ENCODE measurements at regions of chr9 and their contacts with region 1.

Region 1: GRCh38 chr9:385818-386398 is 171.2 kb downstream of the DOCK8 start:
- DNase-seq: no peak
- ATAC-seq: no peak
- H3K4me3 Mint-ChIP-seq: no peak overlapping the region
- H3K27ac Mint-ChIP-seq: no peak overlapping the region
- H3K4me1 Mint-ChIP-seq: no peaks in the 10 kb centered on the region
- H3K27me3 Mint-ChIP-seq: no peaks in the 10 kb centered on the region
- CTCF ChIP-seq: no peak

Region 2: DNA sequence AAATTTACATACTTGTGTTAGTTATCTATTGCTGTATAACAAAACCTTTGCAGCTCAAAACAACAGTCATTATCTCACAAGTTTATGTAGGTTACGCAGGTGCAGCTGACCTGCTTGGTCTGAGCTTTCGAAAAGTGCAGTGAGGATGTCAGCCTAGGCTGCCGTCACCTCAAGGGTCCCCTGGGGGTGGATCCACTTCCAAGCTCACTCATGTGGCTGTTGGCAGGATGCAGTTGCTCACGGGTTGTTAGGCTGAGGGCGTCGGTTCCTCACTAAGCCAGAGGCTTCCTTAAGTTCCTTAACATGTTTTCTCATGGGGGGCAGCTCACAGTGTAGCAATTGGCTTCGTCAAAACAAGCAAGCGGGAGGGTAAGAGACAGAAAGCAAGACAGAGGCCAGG is 31.5 kb before region 1 on chr9:
- CTCF ChIA-PET with region 1: no interaction called
- POLR2A ChIA-PET with region 1: no interaction called
- intact Hi-C with region 1: no loop called
- DNase-seq: no peak
- ATAC-seq: no peak
- H3K4me3 Mint-ChIP-seq: no peak overlapping the region
- H3K27ac Mint-ChIP-seq: no peak overlapping the region
- H3K4me1 Mint-ChIP-seq: peaks cover 9% of the 10 kb centered on the region
- H3K27me3 Mint-ChIP-seq: no peaks in the 10 kb centered on the region
- CTCF ChIP-seq: no peak

Region 3: GRCh38 chr9:406886-407654 is 21.2 kb after region 1 on chr9:
- CTCF ChIA-PET with region 1: no interaction called
- POLR2A ChIA-PET with region 1: no interaction called
- intact Hi-C with region 1: no loop called
- DNase-seq: no peak
- ATAC-seq: no peak
- H3K4me3 Mint-ChIP-seq: no peak overlapping the region
- H3K27ac Mint-ChIP-seq: no peak overlapping the region
- H3K4me1 Mint-ChIP-seq: peaks cover 10% of the 10 kb centered on the region
- H3K27me3 Mint-ChIP-seq: no peaks in the 10 kb centered on the region
- CTCF ChIP-seq: no peak

Region 4: DNA sequence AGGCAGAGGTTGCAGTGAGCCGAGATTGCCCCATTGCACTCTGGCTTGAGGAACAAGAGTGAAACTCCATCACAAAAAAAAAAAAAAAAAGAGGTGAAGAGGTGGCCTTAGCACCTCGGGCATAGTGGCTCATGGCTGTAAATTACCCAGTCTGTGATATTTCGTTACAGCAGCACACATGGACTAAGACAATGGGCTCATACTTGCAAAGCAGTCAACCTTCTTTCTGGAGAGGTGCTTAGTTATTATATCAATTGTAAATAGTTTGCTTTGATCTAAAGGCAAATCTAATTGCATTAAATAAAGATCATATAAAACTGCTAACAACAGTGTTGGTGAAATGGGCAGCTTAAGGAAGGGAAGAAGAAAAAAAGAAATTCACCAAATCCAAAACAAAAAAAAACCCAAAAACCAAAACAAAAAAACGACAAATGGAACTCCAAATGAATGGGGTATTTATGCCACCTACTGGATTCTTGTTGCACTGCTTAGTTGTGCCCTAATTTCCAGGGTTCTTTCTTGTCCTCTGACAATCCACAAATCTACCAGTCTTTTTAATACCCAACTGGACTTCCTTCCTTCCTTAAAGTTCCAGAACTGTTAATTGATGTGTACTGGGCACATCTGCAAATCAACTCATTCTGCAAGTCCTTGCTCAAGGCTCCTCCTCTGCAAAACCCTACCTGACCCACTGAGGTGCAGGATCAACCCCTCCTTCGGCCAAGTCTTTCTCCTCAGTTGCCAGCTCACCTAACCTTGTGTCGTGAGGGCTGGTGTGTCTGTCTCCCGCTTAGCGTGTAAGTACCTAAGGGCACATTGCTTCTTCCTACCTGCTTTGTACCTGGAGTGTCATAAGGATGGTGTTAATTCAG is 420.6 kb after region 1 on chr9:
- CTCF ChIA-PET with region 1: no interaction called
- POLR2A ChIA-PET with region 1: no interaction called
- intact Hi-C with region 1: loop called (anchors 10 kb)
- DNase-seq: no peak
- ATAC-seq: no peak
- H3K4me3 Mint-ChIP-seq: no peak overlapping the region
- H3K27ac Mint-ChIP-seq: no peak overlapping the region
- H3K4me1 Mint-ChIP-seq: no peaks in the 10 kb centered on the region
- H3K27me3 Mint-ChIP-seq: no peaks in the 10 kb centered on the region
- CTCF ChIP-seq: no peak

Region 5: GRCh38 chr9:1009101-1009707 is 623.3 kb after region 1 on chr9:
- CTCF ChIA-PET with region 1: no interaction called
- POLR2A ChIA-PET with region 1: no interaction called
- intact Hi-C with region 1: loop called (anchors 10 kb)
- DNase-seq: peak; percentile 52
- ATAC-seq: peak; percentile 95
- H3K4me3 Mint-ChIP-seq: no peak overlapping the region
- H3K27ac Mint-ChIP-seq: no peak overlapping the region
- H3K4me1 Mint-ChIP-seq: no peaks in the 10 kb centered on the region
- H3K27me3 Mint-ChIP-seq: peaks cover 29% of the 10 kb centered on the region
- CTCF ChIP-seq: peak; percentile 64